Activated T-helper 1 cell treated with anti-CD3 and anti-CD28 coated beads, Interleukin-12 subunit alpha, Interleukin-12 subunit beta, Interleukin-2, Interleukin-4 antibody, amounts not matched to agents 30 ng/mL and 10 ng/mL and 1 ng/mL, durations not matched to agents 14 hours and 24 hours and 36 hours (primary cell): ENCODE measurements at regions of chr9 and their contacts with region 1.

Region 1: DNA sequence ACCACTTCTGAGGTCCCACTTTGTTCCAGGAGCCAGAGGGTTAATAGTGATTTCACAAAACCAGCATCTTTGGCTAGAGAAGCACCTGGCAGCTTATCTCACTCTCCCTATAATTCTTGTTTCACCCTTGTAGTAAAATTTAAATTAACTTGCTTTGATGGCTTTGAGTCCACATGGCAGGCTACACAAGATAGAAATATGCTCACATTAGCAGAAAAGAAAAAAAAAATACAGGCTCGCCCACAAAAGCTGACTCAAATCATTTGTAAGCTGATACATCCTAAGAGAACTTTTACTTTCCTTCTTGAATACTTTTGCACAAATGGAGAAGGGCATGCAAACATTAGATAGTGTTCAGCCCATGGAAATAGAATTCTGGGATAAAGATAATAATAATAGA is 36.2 kb downstream of the TNFSF15 start:
- DNase-seq: no peak
- H3K4me3 Mint-ChIP-seq: no peak overlapping the region
- H3K27ac Mint-ChIP-seq: no peak overlapping the region
- H3K4me1 Mint-ChIP-seq: peaks cover 14% of the 10 kb centered on the region
- H3K27me3 Mint-ChIP-seq: peaks cover 4% of the 10 kb centered on the region

Region 2: GRCh38 chr9:114516913-114517312 is 252.7 kb before region 1 on chr9:
- intact Hi-C with region 1: no loop called
- DNase-seq: no peak
- H3K4me3 Mint-ChIP-seq: no peak overlapping the region
- H3K27ac Mint-ChIP-seq: no peak overlapping the region
- H3K4me1 Mint-ChIP-seq: peaks cover 26% of the 10 kb centered on the region
- H3K27me3 Mint-ChIP-seq: peaks cover 9% of the 10 kb centered on the region

Region 3: GRCh38 chr9:114603248-114603647 is 166.4 kb before region 1 on chr9:
- intact Hi-C with region 1: no loop called
- DNase-seq: no peak
- H3K4me3 Mint-ChIP-seq: no peak overlapping the region
- H3K27ac Mint-ChIP-seq: no peak overlapping the region
- H3K4me1 Mint-ChIP-seq: no peaks in the 10 kb centered on the region
- H3K27me3 Mint-ChIP-seq: no peaks in the 10 kb centered on the region

Region 4: DNA sequence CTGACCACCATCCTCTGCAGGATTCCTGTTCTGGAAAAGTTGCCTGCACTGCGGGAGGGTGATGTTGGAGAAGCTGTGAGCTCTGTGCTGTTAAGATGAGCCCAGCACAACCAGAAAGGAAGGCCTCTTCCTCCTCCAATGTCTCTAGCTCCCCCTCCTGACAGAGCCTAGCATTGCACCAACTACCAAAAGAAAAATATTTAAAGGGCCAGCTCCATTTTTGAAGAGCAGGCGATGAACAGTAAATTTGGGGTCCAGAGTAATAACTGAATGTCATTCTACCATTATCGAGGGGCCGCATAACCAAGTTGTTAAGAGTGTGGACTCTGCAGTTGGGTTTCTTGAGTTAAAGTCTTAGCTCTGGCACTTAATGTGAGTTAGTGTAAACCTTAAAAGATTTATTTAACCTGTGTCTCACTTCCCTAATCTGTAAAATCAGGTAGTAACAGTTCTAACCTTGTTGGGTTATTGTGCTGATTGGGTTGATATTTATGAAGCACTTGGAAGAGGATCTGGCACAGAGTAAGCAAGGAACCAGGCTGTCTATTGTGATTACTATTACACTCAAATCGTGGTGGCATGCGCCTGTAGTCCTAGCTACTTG is 116.0 kb before region 1 on chr9:
- intact Hi-C with region 1: no loop called
- DNase-seq: peak; percentile 76
- H3K4me3 Mint-ChIP-seq: no peak overlapping the region
- H3K27ac Mint-ChIP-seq: peak overlapping the region; percentile 54
- H3K4me1 Mint-ChIP-seq: peaks cover 21% of the 10 kb centered on the region
- H3K27me3 Mint-ChIP-seq: no peaks in the 10 kb centered on the region

Region 5: GRCh38 chr9:114691046-114691955 is 78.3 kb before region 1 on chr9:
- intact Hi-C with region 1: loop called (anchors 2 kb)
- DNase-seq: peak; percentile 80
- H3K4me3 Mint-ChIP-seq: peak overlapping the region; percentile 69
- H3K27ac Mint-ChIP-seq: peak overlapping the region; percentile 98
- H3K4me1 Mint-ChIP-seq: peaks cover 93% of the 10 kb centered on the region
- H3K27me3 Mint-ChIP-seq: no peaks in the 10 kb centered on the region

Region 6: GRCh38 chr9:114754581-114754980 is 15.0 kb before region 1 on chr9:
- intact Hi-C with region 1: loop called (anchors 2 kb)
- DNase-seq: no peak
- H3K4me3 Mint-ChIP-seq: no peak overlapping the region
- H3K27ac Mint-ChIP-seq: no peak overlapping the region
- H3K4me1 Mint-ChIP-seq: peaks cover 26% of the 10 kb centered on the region
- H3K27me3 Mint-ChIP-seq: no peaks in the 10 kb centered on the region

Region 7: GRCh38 chr9:114860187-114860586 is 90.6 kb after region 1 on chr9:
- intact Hi-C with region 1: loop called (anchors 1 kb)
- DNase-seq: no peak
- H3K4me3 Mint-ChIP-seq: no peak overlapping the region
- H3K27ac Mint-ChIP-seq: no peak overlapping the region
- H3K4me1 Mint-ChIP-seq: peaks cover 22% of the 10 kb centered on the region
- H3K27me3 Mint-ChIP-seq: peaks cover 9% of the 10 kb centered on the region